Activated T-helper 1 cell treated with anti-CD3 and anti-CD28 coated beads, Interleukin-12 subunit alpha, Interleukin-12 subunit beta, Interleukin-2, Interleukin-4 antibody, amounts not matched to agents 30 ng/mL and 10 ng/mL and 1 ng/mL, durations not matched to agents 14 hours and 24 hours and 36 hours (primary cell): ENCODE measurements at regions of chr2 and their contacts with region 1.

Region 1: DNA sequence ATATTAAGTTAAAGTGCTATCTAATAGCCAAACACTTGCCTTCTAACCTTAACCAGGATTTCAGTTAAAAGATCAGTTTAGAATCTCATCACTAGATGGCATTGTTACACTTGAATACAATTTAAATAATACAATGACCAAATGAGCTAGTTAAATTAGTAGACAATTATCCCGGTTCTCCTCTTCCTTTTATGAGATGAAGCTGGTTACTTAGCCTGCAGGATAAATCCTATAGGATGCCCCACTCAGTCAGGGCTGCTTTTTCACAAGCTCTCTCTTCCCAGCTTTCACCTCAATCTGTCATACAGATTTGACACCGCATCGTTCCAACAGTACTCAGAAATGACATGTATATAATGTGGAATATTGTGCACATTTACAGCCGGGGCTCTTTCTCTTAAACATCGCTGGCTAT is 678.8 kb downstream of the KCNJ3 start:
- DNase-seq: no peak
- H3K4me3 Mint-ChIP-seq: no peak overlapping the region
- H3K27ac Mint-ChIP-seq: no peak overlapping the region
- H3K4me1 Mint-ChIP-seq: peaks cover 10% of the 10 kb centered on the region
- H3K27me3 Mint-ChIP-seq: peaks cover 5% of the 10 kb centered on the region

Region 2: GRCh38 chr2:155733091-155733853 is 356.0 kb after region 1 on chr2:
- intact Hi-C with region 1: no loop called
- DNase-seq: no peak
- H3K4me3 Mint-ChIP-seq: no peak overlapping the region
- H3K27ac Mint-ChIP-seq: no peak overlapping the region
- H3K4me1 Mint-ChIP-seq: no peaks in the 10 kb centered on the region
- H3K27me3 Mint-ChIP-seq: no peaks in the 10 kb centered on the region

Region 3: GRCh38 chr2:155815886-155816285 is 438.6 kb after region 1 on chr2:
- intact Hi-C with region 1: loop called (anchors 5 kb)
- DNase-seq: no peak
- H3K4me3 Mint-ChIP-seq: no peak overlapping the region
- H3K27ac Mint-ChIP-seq: no peak overlapping the region
- H3K4me1 Mint-ChIP-seq: no peaks in the 10 kb centered on the region
- H3K27me3 Mint-ChIP-seq: no peaks in the 10 kb centered on the region

Region 4: GRCh38 chr2:157055660-157056199 is 1678.5 kb after region 1 on chr2:
- intact Hi-C with region 1: loop called (anchors 5 kb)
- DNase-seq: no peak
- H3K4me3 Mint-ChIP-seq: no peak overlapping the region
- H3K27ac Mint-ChIP-seq: no peak overlapping the region
- H3K4me1 Mint-ChIP-seq: no peaks in the 10 kb centered on the region
- H3K27me3 Mint-ChIP-seq: peaks cover 2% of the 10 kb centered on the region